Activated naive CD4-positive, alpha-beta T cell treated with anti-CD3 and anti-CD28 coated beads for 36 hours (primary cell): ENCODE measurements at regions of chr12 and their contacts with region 1.

Region 1: GRCh38 chr12:47079468-47079980 is at the starts of genes AMIGO2 and PCED1B:
- DNase-seq: peak; percentile 88
- H3K4me3 Mint-ChIP-seq: peak within 1 kb of the TSS; percentile 95
- H3K27ac Mint-ChIP-seq: peak within 1 kb of the TSS; percentile 94
- H3K4me1 Mint-ChIP-seq: peaks cover 69% of the 10 kb centered on the region
- H3K27me3 Mint-ChIP-seq: no peaks in the 10 kb centered on the region
- total RNA-seq, gene AMIGO2: 19.2 to 19.6 TPM
- total RNA-seq, gene PCED1B: 138 to 143 TPM

Region 2: DNA sequence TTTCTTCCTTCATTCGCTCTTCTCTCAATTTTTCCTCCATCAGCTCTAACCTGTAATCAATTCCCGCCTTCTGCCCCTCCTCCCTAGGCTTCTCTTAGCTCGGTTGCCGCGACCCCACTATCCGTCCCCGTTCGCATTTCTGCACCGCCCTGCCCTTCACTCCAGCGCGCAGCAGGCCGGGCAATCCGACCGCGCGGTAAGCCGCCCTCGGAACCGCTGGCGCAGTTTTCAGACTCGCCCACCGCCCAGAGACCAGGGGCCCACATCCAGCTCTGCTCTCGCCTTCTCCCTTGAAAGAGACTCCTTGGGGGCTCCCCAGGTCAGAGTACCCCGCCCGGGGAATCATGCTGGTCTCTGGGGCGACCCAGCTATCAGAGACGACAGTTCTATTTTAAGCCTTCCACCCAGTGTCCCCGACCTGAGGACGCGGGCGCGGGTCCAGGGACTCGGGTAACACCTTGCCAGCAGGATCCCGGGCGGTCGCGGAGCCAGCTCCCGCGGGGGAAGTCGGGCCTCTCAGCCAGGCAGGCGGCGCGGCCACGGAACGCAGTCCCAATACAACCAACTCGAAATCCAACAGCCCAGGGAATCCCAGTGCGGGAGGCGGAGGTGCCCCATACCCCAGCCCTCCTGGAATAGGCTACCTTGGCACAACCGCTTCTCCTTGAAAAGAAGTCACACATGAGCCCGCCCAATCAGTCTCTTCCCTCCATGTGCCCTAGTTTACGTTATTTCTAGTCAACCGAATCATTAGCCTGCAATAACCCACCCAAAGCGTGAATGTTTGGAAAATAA is 248.0 kb before region 1 on chr12:
- CTCF ChIA-PET with region 1: no interaction called
- intact Hi-C with region 1: no loop called
- DNase-seq: peak; percentile 10
- H3K4me3 Mint-ChIP-seq: peak overlapping the region; percentile 59
- H3K27ac Mint-ChIP-seq: no peak overlapping the region
- H3K4me1 Mint-ChIP-seq: peaks cover 15% of the 10 kb centered on the region
- H3K27me3 Mint-ChIP-seq: peaks cover 51% of the 10 kb centered on the region

Region 3: GRCh38 chr12:47190271-47190750 is 110.8 kb after region 1 on chr12:
- CTCF ChIA-PET with region 1: interaction called, 5 read pairs
- intact Hi-C with region 1: loop called (anchors 1 kb)
- DNase-seq: peak; percentile 75
- H3K4me3 Mint-ChIP-seq: peak overlapping the region; percentile 48
- H3K27ac Mint-ChIP-seq: peak overlapping the region; percentile 92
- H3K4me1 Mint-ChIP-seq: peaks cover 88% of the 10 kb centered on the region
- H3K27me3 Mint-ChIP-seq: no peaks in the 10 kb centered on the region

Region 4: GRCh38 chr12:47216150-47216677 is 136.7 kb after region 1 on chr12:
- CTCF ChIA-PET with region 1: interaction called, 15 read pairs
- intact Hi-C with region 1: no loop called
- DNase-seq: peak; percentile 83
- H3K4me3 Mint-ChIP-seq: peak overlapping the region; percentile 94
- H3K27ac Mint-ChIP-seq: peak overlapping the region; percentile 100
- H3K4me1 Mint-ChIP-seq: peaks cover 12% of the 10 kb centered on the region
- H3K27me3 Mint-ChIP-seq: no peaks in the 10 kb centered on the region

Region 5: DNA sequence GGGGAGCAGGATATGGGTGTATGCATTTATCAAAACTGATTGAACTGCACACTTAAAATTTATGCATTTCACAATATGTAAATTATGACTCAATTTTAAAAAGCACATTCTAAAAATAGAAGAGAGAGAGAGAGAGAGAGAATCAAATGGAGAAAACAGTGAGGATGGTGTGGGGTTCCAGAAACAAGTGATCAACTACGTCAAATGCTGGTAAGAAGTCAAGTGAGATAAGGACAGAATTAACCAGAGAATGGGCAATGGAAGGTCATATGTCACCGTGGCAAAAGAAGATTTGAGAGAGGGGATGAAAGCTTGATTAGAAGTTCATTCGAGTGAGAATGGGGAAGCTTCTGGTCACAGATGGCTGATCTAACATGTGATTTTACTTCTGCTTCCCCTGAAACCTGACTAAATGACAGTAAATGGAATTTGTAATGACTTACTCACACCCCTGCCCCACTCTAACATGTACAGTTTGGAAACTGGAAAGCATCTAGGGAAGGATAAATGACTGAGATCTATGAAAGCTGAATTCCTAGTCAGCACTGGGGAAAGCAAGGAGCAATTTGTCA is 276.7 kb after region 1 on chr12:
- CTCF ChIA-PET with region 1: no interaction called
- intact Hi-C with region 1: loop called (anchors 1 kb)
- DNase-seq: peak; percentile 72
- H3K4me3 Mint-ChIP-seq: peak overlapping the region; percentile 64
- H3K27ac Mint-ChIP-seq: peak overlapping the region; percentile 100
- H3K4me1 Mint-ChIP-seq: peaks cover 82% of the 10 kb centered on the region
- H3K27me3 Mint-ChIP-seq: no peaks in the 10 kb centered on the region

Region 6: GRCh38 chr12:47576289-47576945 is 496.9 kb after region 1 on chr12:
- CTCF ChIA-PET with region 1: no interaction called
- intact Hi-C with region 1: loop called (anchors 1 kb)
- DNase-seq: no peak
- H3K4me3 Mint-ChIP-seq: no peak overlapping the region
- H3K27ac Mint-ChIP-seq: no peak overlapping the region
- H3K4me1 Mint-ChIP-seq: peaks cover 30% of the 10 kb centered on the region
- H3K27me3 Mint-ChIP-seq: no peaks in the 10 kb centered on the region